ENCODE measurements at regions of chr5 and their contacts with region 1.

Region 1: GRCh38 chr5:157994906-157995519 is 136.1 kb upstream of the CLINT1 start:
- DNase-seq: peak; percentile 64
- H3K4me3 Mint-ChIP-seq: no peak overlapping the region
- H3K27ac Mint-ChIP-seq: no peak overlapping the region
- H3K4me1 Mint-ChIP-seq: peaks cover 19% of the 10 kb centered on the region
- H3K27me3 Mint-ChIP-seq: peaks cover 61% of the 10 kb centered on the region

Region 2: DNA sequence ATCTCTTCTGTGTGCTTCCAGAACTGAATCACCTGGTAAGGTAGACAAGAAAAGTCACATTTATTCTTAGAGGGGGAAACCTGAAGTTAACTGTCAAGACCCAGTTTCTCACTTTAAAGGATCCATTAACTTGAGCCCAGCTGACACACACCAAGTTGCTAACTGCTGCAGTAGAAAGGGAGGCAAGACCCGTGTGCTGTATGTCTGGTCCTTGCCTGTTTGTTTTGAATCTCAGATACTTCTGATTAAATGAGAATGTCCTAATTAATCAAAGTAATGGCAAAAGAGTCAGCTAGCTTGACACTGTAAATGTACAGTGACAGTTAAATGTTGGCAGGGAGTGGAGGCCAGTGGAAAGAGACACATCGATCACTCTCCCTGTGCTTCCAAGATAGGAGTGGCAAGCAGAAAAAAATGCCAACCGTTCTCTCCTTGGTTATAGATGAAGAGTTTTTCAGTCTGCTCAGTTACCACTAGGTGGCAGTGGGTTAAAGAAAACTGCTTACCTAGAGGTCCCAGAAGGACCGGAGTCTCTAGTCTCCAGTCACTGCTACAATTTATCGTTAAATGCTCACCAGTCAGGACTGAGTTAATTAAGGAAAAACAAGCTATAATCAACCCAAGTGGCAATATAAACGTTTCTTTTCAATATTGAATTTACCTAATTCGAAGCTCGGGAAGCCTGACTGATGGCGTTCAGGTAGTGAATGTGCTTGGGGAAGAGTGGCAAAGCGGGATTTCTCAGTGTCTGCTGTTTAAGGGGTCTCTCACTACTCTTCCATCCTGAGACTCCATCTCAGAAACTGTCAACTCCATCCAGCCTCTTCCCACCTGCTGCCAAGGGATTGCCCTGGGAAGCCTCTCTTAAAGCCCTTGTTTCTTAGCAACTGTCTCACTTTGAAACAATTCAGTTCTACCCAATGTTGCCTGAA is 233.1 kb before region 1 on chr5:
- CTCF ChIA-PET with region 1: interaction called, 11 read pairs
- DNase-seq: peak; percentile 24
- H3K4me3 Mint-ChIP-seq: no peak overlapping the region
- H3K27ac Mint-ChIP-seq: no peak overlapping the region
- H3K4me1 Mint-ChIP-seq: no peaks in the 10 kb centered on the region
- H3K27me3 Mint-ChIP-seq: peaks cover 6% of the 10 kb centered on the region

Region 3: GRCh38 chr5:157820593-157821252 is 174.3 kb before region 1 on chr5:
- CTCF ChIA-PET with region 1: interaction called, 11 read pairs
- DNase-seq: peak; percentile 25
- H3K4me3 Mint-ChIP-seq: no peak overlapping the region
- H3K27ac Mint-ChIP-seq: no peak overlapping the region
- H3K4me1 Mint-ChIP-seq: peaks cover 12% of the 10 kb centered on the region
- H3K27me3 Mint-ChIP-seq: no peaks in the 10 kb centered on the region